ENCODE measurements at regions of chr18 and their contacts with region 1.

Region 1: DNA sequence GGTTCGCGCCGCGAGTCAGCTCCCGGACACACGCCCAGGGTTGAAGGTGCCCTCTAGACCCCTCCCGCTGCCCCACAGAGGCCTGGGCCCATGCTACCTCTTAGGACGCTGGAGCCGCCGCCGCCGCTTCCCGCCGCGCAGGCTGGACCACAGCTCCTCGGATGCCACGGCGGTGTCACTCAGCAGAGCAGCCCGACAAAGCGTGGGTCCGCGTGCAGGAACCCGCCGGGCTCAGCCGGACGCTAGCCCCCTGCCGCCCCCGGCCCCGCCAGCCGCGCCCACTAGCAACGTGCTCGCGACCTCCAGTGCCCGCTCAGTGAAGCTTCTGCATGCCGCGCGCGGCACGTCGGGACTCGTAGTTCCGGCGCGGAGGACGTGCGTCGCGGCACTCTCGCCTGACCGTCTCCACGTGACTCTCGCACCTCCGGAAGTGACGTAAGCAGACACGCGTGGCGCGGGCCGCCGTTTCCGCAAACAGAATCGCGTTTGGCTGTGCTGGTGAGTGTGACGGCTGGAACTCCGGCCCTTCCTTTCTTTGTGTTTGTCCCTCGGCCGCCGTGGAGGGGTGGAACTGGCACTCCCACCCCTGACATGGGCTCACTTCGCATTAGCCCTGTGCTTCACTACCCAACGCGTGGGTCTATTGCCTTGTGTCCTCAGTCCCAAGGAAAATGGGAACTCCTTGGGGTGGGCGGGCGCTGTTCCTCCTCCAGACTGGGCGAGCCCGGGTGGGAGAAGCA is at the starts of genes FAM210A and RNMT:
- DNase-seq: peak; percentile 81 to 97 (median 84)
- ATAC-seq: peak; percentile 95
- H3K4me3 ChIP-seq: peak within 1 kb of the TSS; percentile 97
- H3K27ac ChIP-seq: peak within 1 kb of the TSS; percentile 93
- H3K4me1 ChIP-seq: peaks cover 5 to 16% of the 10 kb centered on the region in 2 experiments; a peak in 4 of 5 replicates
- H3K27me3 ChIP-seq: no peaks in the 10 kb centered on the region
- CTCF ChIP-seq: peak in 2 of 3 experiments; percentile 5 to 14; a peak in 1 of 6 replicates
- EP300 ChIP-seq: peak; percentile 56
- POLR2A ChIP-seq: peak; percentile 86
- RAD21 ChIP-seq: peak in 1 of 2 experiments; percentile 21; a peak in 2 of 4 replicates
- polyA plus RNA-seq, gene FAM210A: 8.3 to 11.2 TPM
- polyA plus RNA-seq, gene RNMT: 40.0 to 63.4 TPM

Region 2: GRCh38 chr18:13712400-13713131 is 13.8 kb before region 1 on chr18:
- CTCF ChIA-PET with region 1: no interaction called
- POLR2A ChIA-PET with region 1: interaction called, 12 read pairs
- in situ Hi-C with region 1: no loop called
- intact Hi-C with region 1: no loop called
- DNase-seq: peak in 1 of 4 experiments; percentile 30
- ATAC-seq: peak; percentile 70
- H3K4me3 ChIP-seq: no peak overlapping the region
- H3K27ac ChIP-seq: no peak overlapping the region
- H3K4me1 ChIP-seq: no peaks in the 10 kb centered on the region; a peak in 2 of 5 replicates
- H3K27me3 ChIP-seq: no peaks in the 10 kb centered on the region
- CTCF ChIP-seq: no peak
- EP300 ChIP-seq: no peak
- POLR2A ChIP-seq: no peak
- RAD21 ChIP-seq: no peak

Measured in K562 (cell line).